ENCODE measurements at regions of chr2 and their contacts with region 1.

Region 1: DNA sequence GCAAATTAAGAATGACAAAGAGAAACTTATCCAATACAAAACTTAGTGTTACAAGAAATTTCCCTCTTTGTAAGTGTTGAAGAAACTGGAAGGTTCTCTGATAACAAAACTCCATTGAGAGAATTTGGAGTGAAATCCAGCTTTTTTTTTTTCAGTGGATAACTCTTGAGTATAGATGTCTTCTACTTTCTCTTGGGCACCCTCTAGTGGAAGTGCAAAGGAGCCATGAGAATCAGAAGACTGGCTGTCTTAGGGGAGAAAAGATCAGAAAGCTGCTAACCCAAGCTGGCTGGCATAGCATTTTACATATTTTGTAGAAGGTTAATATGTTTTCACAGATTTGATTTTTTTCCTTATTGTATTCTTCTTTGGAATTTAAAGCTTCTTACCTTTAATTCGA is 138.8 kb upstream of the SATB2 start:
- H3K4me3 ChIP-seq: no peak overlapping the region
- H3K27ac ChIP-seq: no peak overlapping the region
- H3K4me1 ChIP-seq: no peaks in the 10 kb centered on the region
- CTCF ChIP-seq: no peak

Region 2: DNA sequence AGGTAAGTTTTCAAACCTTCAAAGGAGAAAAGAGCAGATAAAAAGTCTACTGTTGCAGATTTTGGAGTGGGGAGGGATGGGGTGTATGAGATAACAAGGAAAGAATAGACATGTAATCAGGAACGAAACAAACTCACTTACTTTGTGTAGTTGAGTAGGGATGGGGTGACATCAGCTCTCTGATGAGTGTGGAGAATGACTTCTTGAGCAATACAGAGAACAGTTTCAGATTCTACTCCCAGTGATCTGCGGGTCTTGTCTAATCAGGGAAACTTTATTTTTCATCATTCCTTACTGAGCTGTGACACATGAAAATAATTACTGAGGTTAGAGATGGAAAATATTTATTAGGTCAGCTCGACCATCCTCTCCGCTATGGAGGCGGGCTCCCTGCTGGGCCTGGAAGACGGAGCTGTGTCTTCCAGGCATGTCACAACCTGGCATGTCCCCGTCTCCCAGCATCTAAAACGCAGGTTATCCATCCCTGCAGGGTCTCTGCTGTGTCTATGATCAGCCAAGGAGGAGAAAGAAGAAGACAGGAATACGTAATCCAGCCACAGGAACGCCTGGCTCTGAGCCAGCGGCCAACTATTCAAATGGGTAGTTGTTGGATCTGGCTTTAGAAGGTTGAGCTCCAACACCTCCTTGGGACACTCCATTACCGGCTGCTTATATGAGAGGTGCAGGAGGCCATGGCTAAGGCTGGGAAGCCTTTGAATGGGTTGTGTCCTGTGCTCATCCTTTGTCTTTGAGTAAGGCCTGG is 39.8 kb before region 1 on chr2:
- CTCF ChIA-PET with region 1: no interaction called
- POLR2A ChIA-PET with region 1: no interaction called
- H3K4me3 ChIP-seq: no peak overlapping the region
- H3K27ac ChIP-seq: no peak overlapping the region
- H3K4me1 ChIP-seq: no peaks in the 10 kb centered on the region
- CTCF ChIP-seq: no peak

Region 3: GRCh38 chr2:199572571-199572970 is 24.0 kb before region 1 on chr2:
- CTCF ChIA-PET with region 1: interaction called, 12 read pairs
- POLR2A ChIA-PET with region 1: no interaction called
- H3K4me3 ChIP-seq: no peak overlapping the region
- H3K27ac ChIP-seq: no peak overlapping the region
- H3K4me1 ChIP-seq: no peaks in the 10 kb centered on the region; the same call in 1 of the 2 replicates
- CTCF ChIP-seq: no peak

Region 4: DNA sequence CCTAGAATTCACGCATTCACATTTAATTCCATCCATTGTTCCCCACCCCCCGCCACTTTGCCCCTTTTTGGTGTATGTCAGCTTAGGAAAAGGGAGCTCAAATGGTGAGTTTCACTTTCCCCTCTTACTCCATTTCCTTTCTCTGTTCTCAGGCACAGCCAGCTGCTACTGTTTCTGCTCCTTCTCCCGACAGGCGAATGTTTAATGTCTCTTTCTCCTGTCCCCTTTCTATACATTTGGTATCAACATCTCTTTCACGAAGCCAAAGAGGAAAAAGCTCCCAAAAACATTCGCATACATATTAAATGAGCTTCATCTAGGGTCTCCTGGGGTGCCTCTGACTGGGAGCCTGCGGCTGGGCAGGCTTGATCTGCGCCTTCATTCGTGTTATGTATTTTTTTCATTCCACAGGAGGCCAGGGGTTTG is 14.6 kb before region 1 on chr2:
- CTCF ChIA-PET with region 1: interaction called, 13 read pairs
- POLR2A ChIA-PET with region 1: no interaction called
- H3K4me3 ChIP-seq: no peak overlapping the region
- H3K27ac ChIP-seq: no peak overlapping the region
- H3K4me1 ChIP-seq: no peaks in the 10 kb centered on the region; the same call in 1 of the 2 replicates
- CTCF ChIP-seq: no peak

Region 5: DNA sequence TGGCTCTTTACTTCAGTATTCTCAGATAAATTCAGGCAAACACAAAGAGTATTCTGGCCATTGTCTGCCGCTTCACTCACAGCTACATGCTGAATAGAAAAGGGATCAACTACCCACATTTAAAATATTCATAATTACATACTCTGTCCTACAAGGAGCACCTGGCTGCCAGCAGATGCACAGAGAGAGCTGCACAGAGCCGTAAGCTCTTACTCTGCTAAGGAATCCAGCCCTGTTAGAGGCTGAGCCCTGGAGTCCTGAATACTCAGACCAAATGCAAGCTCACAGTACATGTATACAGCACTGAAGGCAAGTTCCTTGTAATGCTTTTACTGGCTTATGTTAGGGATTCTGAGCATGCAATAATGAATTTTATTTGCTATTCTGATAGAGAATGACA is 174.2 kb after region 1 on chr2:
- CTCF ChIA-PET with region 1: no interaction called
- POLR2A ChIA-PET with region 1: no interaction called
- H3K4me3 ChIP-seq: no peak overlapping the region
- H3K27ac ChIP-seq: no peak overlapping the region
- H3K4me1 ChIP-seq: no peaks in the 10 kb centered on the region
- CTCF ChIP-seq: no peak

Measured in HEK293 (cell line).